CD8-positive, alpha-beta T cell (primary cell): ENCODE measurements at regions of chr5 and their contacts with region 1.

Region 1: DNA sequence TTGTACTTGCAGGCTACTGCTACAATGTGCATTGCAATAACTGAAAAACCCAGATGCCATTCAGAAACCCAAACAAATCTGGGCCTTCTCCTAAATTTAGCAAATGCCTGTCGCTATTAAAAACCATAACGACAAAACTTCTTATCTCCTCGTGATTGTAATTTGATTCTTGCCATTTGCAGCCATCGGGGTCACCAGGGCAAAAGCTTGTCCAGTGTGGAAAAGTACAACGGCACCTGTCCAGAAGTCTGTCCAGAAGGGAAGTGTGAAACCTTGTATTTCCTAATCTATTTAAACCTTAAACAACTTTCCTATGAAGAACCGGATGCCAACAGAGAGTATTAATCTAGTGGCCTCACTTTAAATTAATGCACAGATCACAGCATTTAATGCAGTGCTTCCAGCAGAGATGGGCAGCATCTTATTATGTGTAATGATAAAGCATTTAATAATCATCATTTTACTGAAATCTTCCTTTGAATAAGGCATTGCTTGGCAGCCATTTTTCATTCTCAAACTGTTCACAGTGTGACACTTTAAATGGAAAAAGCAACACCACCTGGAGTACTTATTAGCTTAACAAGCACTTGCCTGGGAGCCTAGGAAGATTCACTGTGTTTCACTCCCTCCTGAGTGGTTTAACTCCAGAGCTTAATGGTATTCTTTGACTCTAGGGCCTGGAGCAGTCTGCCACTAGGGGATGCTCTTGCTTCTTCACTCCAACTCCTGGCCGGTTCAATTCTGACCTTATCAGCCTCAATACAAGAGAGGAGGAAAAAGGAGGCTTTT is 4.9 kb upstream of the C7 start:
- DNase-seq: peak in 2 of 9 experiments; percentile 27 to 32
- ATAC-seq: no peak
- H3K4me3 ChIP-seq: no peak overlapping the region
- H3K4me3 Mint-ChIP-seq: no peak overlapping the region
- H3K27ac ChIP-seq: no peak overlapping the region
- H3K27ac Mint-ChIP-seq: no peak overlapping the region
- H3K4me1 ChIP-seq: no peaks in the 10 kb centered on the region
- H3K4me1 Mint-ChIP-seq: peaks cover 2% of the 10 kb centered on the region
- H3K27me3 ChIP-seq: no peaks in the 10 kb centered on the region
- H3K27me3 Mint-ChIP-seq: peaks cover 10% of the 10 kb centered on the region
- CTCF ChIP-seq: peak; percentile 38

Region 2: GRCh38 chr5:40871177-40871576 is 33.2 kb before region 1 on chr5:
- CTCF ChIA-PET with region 1: no interaction called
- POLR2A ChIA-PET with region 1: no interaction called
- intact Hi-C with region 1: no loop called
- DNase-seq: no peak
- ATAC-seq: no peak
- H3K4me3 ChIP-seq: no peak overlapping the region
- H3K4me3 Mint-ChIP-seq: no peak overlapping the region
- H3K27ac ChIP-seq: no peak overlapping the region
- H3K27ac Mint-ChIP-seq: no peak overlapping the region
- H3K4me1 ChIP-seq: no peaks in the 10 kb centered on the region
- H3K4me1 Mint-ChIP-seq: no peaks in the 10 kb centered on the region
- H3K27me3 ChIP-seq: no peaks in the 10 kb centered on the region
- H3K27me3 Mint-ChIP-seq: peaks cover 8% of the 10 kb centered on the region
- CTCF ChIP-seq: no peak

Region 3: GRCh38 chr5:41843456-41844370 is 939.3 kb after region 1 on chr5:
- CTCF ChIA-PET with region 1: no interaction called
- POLR2A ChIA-PET with region 1: no interaction called
- intact Hi-C with region 1: loop called in 1 of 2 experiments (anchors 2 kb)
- DNase-seq: peak in 4 of 9 experiments; percentile 12 to 60 (median 34)
- ATAC-seq: peak; percentile 71
- H3K4me3 ChIP-seq: no peak overlapping the region
- H3K4me3 Mint-ChIP-seq: no peak overlapping the region
- H3K27ac ChIP-seq: no peak overlapping the region
- H3K27ac Mint-ChIP-seq: no peak overlapping the region
- H3K4me1 ChIP-seq: no peaks in the 10 kb centered on the region
- H3K4me1 Mint-ChIP-seq: no peaks in the 10 kb centered on the region
- H3K27me3 ChIP-seq: no peaks in the 10 kb centered on the region
- H3K27me3 Mint-ChIP-seq: no peaks in the 10 kb centered on the region
- CTCF ChIP-seq: peak; percentile 71